AG04450 (cell line): ENCODE measurements at regions of chr4 and their contacts with region 1.

Region 1: GRCh38 chr4:15882675-15883086 is 55.9 kb downstream of the FGFBP1 start:
- DNase-seq: peak; percentile 65
- H3K4me3 ChIP-seq: no peak overlapping the region
- H3K27ac ChIP-seq: no peak overlapping the region
- H3K27me3 ChIP-seq: peaks cover 24% of the 10 kb centered on the region
- CTCF ChIP-seq: peak; percentile 97

Region 2: GRCh38 chr4:15479089-15479912 is 403.4 kb before region 1 on chr4:
- CTCF ChIA-PET with region 1: interaction called, 19 read pairs
- POLR2A ChIA-PET with region 1: no interaction called
- DNase-seq: peak; percentile 70
- H3K4me3 ChIP-seq: peak overlapping the region; percentile 69
- H3K27ac ChIP-seq: peak overlapping the region; percentile 97
- H3K27me3 ChIP-seq: no peaks in the 10 kb centered on the region
- CTCF ChIP-seq: peak; percentile 84

Region 3: DNA sequence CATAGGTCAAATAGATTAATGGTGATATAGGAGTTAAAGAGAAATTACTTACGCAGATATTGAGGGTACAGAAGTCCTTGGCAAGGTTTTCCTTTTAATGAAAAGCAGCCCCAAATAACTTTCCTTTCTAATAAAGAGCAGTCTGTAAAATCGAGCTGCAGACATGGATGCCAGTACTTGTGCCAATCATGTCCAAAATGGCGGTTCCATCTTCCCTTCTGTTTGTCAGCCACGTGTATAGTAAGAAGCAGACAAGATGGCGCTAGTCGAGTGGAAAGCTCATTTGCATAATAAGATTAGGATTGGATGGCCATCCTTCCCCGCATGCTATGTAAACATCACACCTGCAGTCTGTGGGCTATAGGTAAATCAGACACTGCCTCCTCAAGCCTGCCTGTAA is 12.6 kb before region 1 on chr4:
- CTCF ChIA-PET with region 1: interaction called, 18 read pairs
- POLR2A ChIA-PET with region 1: no interaction called
- DNase-seq: no peak
- H3K4me3 ChIP-seq: no peak overlapping the region
- H3K27ac ChIP-seq: no peak overlapping the region
- H3K27me3 ChIP-seq: no peaks in the 10 kb centered on the region
- CTCF ChIP-seq: no peak

Region 4: GRCh38 chr4:15920723-15921591 is 38.3 kb after region 1 on chr4:
- CTCF ChIA-PET with region 1: interaction called, 13 read pairs
- POLR2A ChIA-PET with region 1: no interaction called
- DNase-seq: peak; percentile 95
- H3K4me3 ChIP-seq: no peak overlapping the region
- H3K27ac ChIP-seq: peak overlapping the region; percentile 84
- H3K27me3 ChIP-seq: no peaks in the 10 kb centered on the region
- CTCF ChIP-seq: no peak

Region 5: GRCh38 chr4:15956179-15956850 is 73.6 kb after region 1 on chr4:
- CTCF ChIA-PET with region 1: interaction called, 170 read pairs
- POLR2A ChIA-PET with region 1: interaction called, 3 read pairs
- DNase-seq: no peak
- H3K4me3 ChIP-seq: no peak overlapping the region
- H3K27ac ChIP-seq: no peak overlapping the region
- H3K27me3 ChIP-seq: peaks cover 9% of the 10 kb centered on the region
- CTCF ChIP-seq: peak; percentile 98

Region 6: GRCh38 chr4:16264798-16265197 is 382.1 kb after region 1 on chr4:
- CTCF ChIA-PET with region 1: interaction called, 15 read pairs
- POLR2A ChIA-PET with region 1: no interaction called
- DNase-seq: no peak
- H3K4me3 ChIP-seq: no peak overlapping the region
- H3K27ac ChIP-seq: no peak overlapping the region
- H3K27me3 ChIP-seq: peaks cover 12% of the 10 kb centered on the region
- CTCF ChIP-seq: peak; percentile 68